Natural killer cell (primary cell): ENCODE measurements at regions of chr6 and their contacts with region 1.

Region 1: DNA sequence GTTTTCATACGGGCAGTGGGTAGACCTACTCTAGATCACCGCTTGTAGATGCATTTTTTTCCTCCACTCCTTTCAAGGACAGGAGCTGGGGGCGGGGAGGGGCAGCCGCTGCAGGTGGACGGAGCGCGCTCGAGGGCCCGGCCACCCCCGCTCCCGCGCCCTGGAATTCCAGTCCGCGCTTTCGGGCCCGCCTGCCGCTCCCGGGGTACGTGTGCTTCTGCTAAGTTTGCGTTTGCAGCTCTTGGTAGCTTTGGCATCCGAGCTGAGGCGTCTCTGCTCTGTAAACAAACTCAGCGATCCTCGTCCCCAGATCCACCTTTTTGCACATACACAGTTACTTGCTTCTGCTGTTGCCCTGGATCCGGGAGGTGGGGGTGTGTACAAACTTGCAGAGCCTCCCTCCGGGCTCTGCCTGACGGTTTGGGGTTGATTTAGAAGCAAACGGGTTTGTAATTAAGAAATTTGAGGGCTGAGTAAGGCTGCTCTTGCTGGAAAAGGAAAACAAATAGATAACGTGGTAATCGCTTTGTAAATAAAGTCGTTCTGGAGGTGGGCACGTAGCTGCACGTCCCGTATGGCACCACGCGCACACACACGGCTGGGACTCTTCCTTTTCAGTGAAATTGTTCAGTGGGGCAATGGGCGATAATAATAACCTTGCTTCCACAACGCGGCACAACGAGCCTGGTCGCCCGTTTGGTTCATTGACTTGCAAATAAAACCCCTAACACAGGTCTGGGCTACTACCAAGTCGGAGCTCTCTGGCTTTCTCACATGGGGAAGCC is 976 bp upstream of the CITED2 start:
- DNase-seq: peak; percentile 82 to 91
- ATAC-seq: peak; percentile 54 to 74 (median 57)
- H3K4me3 ChIP-seq: peak overlapping the region; percentile 98
- H3K4me3 Mint-ChIP-seq: peak overlapping the region; percentile 99
- H3K27ac ChIP-seq: peak overlapping the region; percentile 83
- H3K27ac Mint-ChIP-seq: peak overlapping the region; percentile 98 to 100
- H3K4me1 ChIP-seq: peaks cover 9% of the 10 kb centered on the region
- H3K4me1 Mint-ChIP-seq: peaks cover 60 to 67% of the 10 kb centered on the region in 2 donors
- H3K27me3 ChIP-seq: no peaks in the 10 kb centered on the region
- H3K27me3 Mint-ChIP-seq: no peaks in the 10 kb centered on the region
- CTCF ChIP-seq: no peak

Region 2: GRCh38 chr6:138773177-138774091 is 602.0 kb before region 1 on chr6 and contains the start of gene CCDC28A:
- intact Hi-C with region 1: loop called (anchors 5 kb)
- DNase-seq: peak; percentile 89 to 97
- ATAC-seq: peak; percentile 87 to 94 (median 89)
- H3K4me3 ChIP-seq: peak within 1 kb of the TSS; percentile 94
- H3K4me3 Mint-ChIP-seq: peak within 1 kb of the TSS; percentile 100
- H3K27ac ChIP-seq: peak within 1 kb of the TSS; percentile 95
- H3K27ac Mint-ChIP-seq: peak within 1 kb of the TSS; percentile 99 to 100
- H3K4me1 ChIP-seq: peaks cover 4% of the 10 kb centered on the region
- H3K4me1 Mint-ChIP-seq: peaks cover 18 to 30% of the 10 kb centered on the region in 2 donors
- H3K27me3 ChIP-seq: no peaks in the 10 kb centered on the region
- H3K27me3 Mint-ChIP-seq: no peaks in the 10 kb centered on the region
- CTCF ChIP-seq: no peak
- total RNA-seq, gene CCDC28A: 22.2 to 25.4 (median 24.3) TPM

Region 3: GRCh38 chr6:139028658-139029469 is 346.6 kb before region 1 on chr6 and contains the start of gene ABRACL:
- intact Hi-C with region 1: loop called (anchors 5 kb)
- DNase-seq: peak; percentile 47 to 88
- ATAC-seq: peak; percentile 64 to 80 (median 68)
- H3K4me3 ChIP-seq: peak within 1 kb of the TSS; percentile 99
- H3K4me3 Mint-ChIP-seq: no peak within 1 kb of the TSS
- H3K27ac ChIP-seq: peak within 1 kb of the TSS; percentile 91
- H3K27ac Mint-ChIP-seq: peak within 1 kb of the TSS in 1 of 2 donors; percentile 65
- H3K4me1 ChIP-seq: peaks cover 23% of the 10 kb centered on the region
- H3K4me1 Mint-ChIP-seq: peaks cover 24 to 32% of the 10 kb centered on the region in 2 donors
- H3K27me3 ChIP-seq: no peaks in the 10 kb centered on the region
- H3K27me3 Mint-ChIP-seq: no peaks in the 10 kb centered on the region
- CTCF ChIP-seq: no peak
- total RNA-seq, gene ABRACL: 36.4 to 39.9 (median 37.5) TPM

Region 4: GRCh38 chr6:139134817-139135581 is 240.4 kb before region 1 on chr6 and contains the start of gene HECA:
- intact Hi-C with region 1: loop called (anchors 2 kb)
- DNase-seq: peak; percentile 99 to 100
- ATAC-seq: peak; percentile 82 to 95 (median 87)
- H3K4me3 ChIP-seq: peak within 1 kb of the TSS; percentile 84
- H3K4me3 Mint-ChIP-seq: peak within 1 kb of the TSS; percentile 88
- H3K27ac ChIP-seq: peak within 1 kb of the TSS; percentile 97
- H3K27ac Mint-ChIP-seq: peak within 1 kb of the TSS; percentile 98
- H3K4me1 ChIP-seq: peaks cover 34% of the 10 kb centered on the region
- H3K4me1 Mint-ChIP-seq: peaks cover 55 to 71% of the 10 kb centered on the region in 2 donors
- H3K27me3 ChIP-seq: no peaks in the 10 kb centered on the region
- H3K27me3 Mint-ChIP-seq: no peaks in the 10 kb centered on the region
- CTCF ChIP-seq: no peak
- total RNA-seq, gene HECA: 76.5 to 80.5 (median 77.6) TPM

Region 5: GRCh38 chr6:139291813-139292619 is 83.4 kb before region 1 on chr6 and contains the start of gene TXLNB:
- intact Hi-C with region 1: loop called (anchors 1 kb)
- DNase-seq: peak; percentile 64 to 89
- ATAC-seq: peak; percentile 76 to 86 (median 80)
- H3K4me3 ChIP-seq: peak within 1 kb of the TSS; percentile 14
- H3K4me3 Mint-ChIP-seq: peak within 1 kb of the TSS; percentile 96
- H3K27ac ChIP-seq: peak within 1 kb of the TSS; percentile 97
- H3K27ac Mint-ChIP-seq: peak within 1 kb of the TSS; percentile 93 to 99
- H3K4me1 ChIP-seq: peaks cover 28% of the 10 kb centered on the region
- H3K4me1 Mint-ChIP-seq: peaks cover 34 to 46% of the 10 kb centered on the region in 2 donors
- H3K27me3 ChIP-seq: no peaks in the 10 kb centered on the region
- H3K27me3 Mint-ChIP-seq: no peaks in the 10 kb centered on the region
- CTCF ChIP-seq: no peak
- total RNA-seq, gene TXLNB: 0.24 to 0.93 (median 0.50) TPM

Region 6: GRCh38 chr6:139323511-139324300 is 51.7 kb before region 1 on chr6:
- intact Hi-C with region 1: loop called (anchors 2 kb)
- DNase-seq: peak; percentile 70 to 90
- ATAC-seq: peak; percentile 79 to 85 (median 82)
- H3K4me3 ChIP-seq: peak overlapping the region; percentile 34
- H3K4me3 Mint-ChIP-seq: peak overlapping the region; percentile 90
- H3K27ac ChIP-seq: peak overlapping the region; percentile 92
- H3K27ac Mint-ChIP-seq: peak overlapping the region; percentile 98
- H3K4me1 ChIP-seq: peaks cover 29% of the 10 kb centered on the region
- H3K4me1 Mint-ChIP-seq: peaks cover 36 to 39% of the 10 kb centered on the region in 2 donors
- H3K27me3 ChIP-seq: no peaks in the 10 kb centered on the region
- H3K27me3 Mint-ChIP-seq: no peaks in the 10 kb centered on the region
- CTCF ChIP-seq: no peak

Region 7: DNA sequence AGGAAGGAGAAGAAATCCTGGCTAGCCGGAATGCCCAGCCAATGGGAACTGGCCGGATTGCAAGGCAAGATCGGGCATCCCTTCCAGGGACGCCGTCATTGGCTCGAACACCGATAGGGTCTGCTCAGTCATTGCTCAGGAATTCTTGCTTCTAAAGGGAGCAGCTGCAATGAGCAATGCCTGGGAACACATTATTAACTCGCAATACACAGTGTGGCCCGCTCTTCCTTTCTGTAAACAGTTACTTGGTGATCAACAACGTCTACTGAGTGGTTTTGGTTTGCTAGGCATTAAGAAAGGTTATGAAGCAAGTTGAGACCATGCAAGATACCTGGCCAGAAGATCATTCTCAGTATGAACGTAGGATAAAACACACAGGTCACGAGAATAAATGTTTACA is 164.4 kb after region 1 on chr6:
- intact Hi-C with region 1: loop called (anchors 5 kb)
- DNase-seq: no peak
- ATAC-seq: peak in 2 of 3 donors; percentile 20 to 39
- H3K4me3 ChIP-seq: no peak overlapping the region
- H3K4me3 Mint-ChIP-seq: no peak overlapping the region
- H3K27ac ChIP-seq: peak overlapping the region; percentile 44
- H3K27ac Mint-ChIP-seq: peak overlapping the region; percentile 2 to 69
- H3K4me1 ChIP-seq: peaks cover 17% of the 10 kb centered on the region
- H3K4me1 Mint-ChIP-seq: peaks cover 19 to 20% of the 10 kb centered on the region in 2 donors
- H3K27me3 ChIP-seq: no peaks in the 10 kb centered on the region
- H3K27me3 Mint-ChIP-seq: no peaks in the 10 kb centered on the region
- CTCF ChIP-seq: no peak